ENCODE measurements at regions of chr19 and their contacts with region 1.

Region 1: DNA sequence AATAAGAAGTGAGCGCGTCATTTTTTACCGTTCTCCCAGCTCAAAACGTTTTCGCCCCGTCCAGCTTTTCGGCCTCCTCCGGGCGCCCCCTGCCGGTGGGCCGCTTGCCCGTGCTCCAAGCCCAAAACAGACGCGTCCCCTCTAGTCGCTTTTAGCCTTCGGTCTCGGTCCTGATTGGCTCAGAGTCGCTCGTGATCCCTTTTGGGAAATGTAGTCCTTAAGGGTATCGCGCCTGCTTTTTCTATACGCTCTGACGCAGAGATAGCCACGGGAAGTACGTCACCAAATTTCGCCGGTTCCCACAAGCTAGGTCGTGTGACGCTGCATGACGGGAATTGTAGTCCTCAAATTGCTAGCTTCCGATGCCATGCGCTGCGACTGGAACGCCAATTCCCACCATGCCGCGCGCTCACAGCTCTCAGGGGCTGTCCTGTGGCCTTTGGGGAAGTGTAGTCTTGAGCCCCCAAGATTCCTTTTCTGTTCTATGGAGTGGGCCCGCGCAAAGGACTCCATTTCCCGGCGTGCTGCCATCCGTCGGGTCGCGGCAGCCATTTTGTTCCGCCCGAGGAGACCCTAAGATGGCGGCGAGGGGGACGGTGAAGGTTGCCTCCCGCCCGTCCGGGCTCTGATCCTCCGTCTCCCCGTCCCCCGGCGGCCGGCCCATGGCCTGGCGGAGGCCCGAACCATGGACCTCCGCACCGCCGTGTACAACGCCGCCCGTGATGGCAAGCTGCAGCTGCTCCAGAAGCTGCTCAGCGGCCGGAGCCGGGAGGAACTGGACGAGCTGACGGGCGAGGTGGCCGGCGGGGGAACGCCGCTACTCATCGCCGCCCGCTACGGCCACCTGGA is at the start of gene FEM1A:
- DNase-seq: peak; percentile 100
- ATAC-seq: peak; percentile 98
- H3K4me3 ChIP-seq: peak within 1 kb of the TSS; percentile 76
- H3K27ac ChIP-seq: peak within 1 kb of the TSS; percentile 93
- H3K4me1 ChIP-seq: peaks cover 22% of the 10 kb centered on the region
- H3K27me3 ChIP-seq: no peaks in the 10 kb centered on the region
- CTCF ChIP-seq: peak; percentile 98 to 99 (median 99); a peak in 5 of 6 replicates
- EP300 ChIP-seq: no peak
- POLR2A ChIP-seq: peak; percentile 89
- RAD21 ChIP-seq: peak; percentile 72
- polyA plus RNA-seq, gene FEM1A: 0.27 to 0.31 TPM

Region 2: DNA sequence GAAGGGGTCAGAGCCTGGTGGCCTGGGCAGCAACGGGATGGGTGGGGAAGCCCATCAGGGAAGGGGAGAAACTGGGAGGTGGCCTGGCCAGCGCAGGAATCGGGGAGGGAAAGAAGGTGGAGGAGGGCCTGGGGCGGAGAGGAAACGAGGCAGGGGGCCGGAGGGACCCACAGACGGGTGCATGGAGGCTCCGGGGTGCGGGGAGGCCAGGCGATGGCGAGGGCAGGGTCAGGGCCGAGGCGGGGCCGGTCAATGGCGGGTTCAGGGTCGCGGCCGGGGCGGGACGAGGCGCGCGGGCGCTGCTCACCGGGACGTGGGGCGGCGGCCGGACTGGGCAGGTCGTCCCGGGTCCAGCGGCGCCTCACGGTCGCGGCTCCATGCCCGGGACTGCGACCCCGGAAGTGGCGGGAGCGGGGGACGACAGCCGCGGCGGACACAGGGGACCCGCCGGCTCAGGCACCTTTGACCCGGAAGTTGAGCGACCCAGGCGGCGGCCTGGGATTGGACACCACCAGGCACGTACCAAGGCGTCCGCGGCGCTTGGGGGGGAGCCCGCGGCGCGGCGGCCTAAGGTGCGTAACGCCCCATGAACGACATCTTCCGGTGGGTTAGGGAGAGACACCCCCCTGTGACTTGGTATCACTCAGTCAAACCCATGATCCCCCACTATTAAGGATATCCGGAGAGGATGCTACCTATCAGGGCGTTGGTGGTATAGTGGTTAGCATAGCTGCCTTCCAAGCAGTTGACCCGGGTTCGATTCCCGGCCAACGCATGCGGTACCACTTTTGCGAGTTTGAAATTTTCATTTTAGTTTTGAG is 67.8 kb before region 1 on chr19 and contains the start of gene DPP9:
- CTCF ChIA-PET with region 1: interaction called, 160 read pairs
- POLR2A ChIA-PET with region 1: interaction called, 17 read pairs
- RAD21 ChIA-PET with region 1: interaction called, 36 read pairs
- SMC1A ChIA-PET with region 1: interaction called, 87 read pairs
- in situ Hi-C with region 1: no loop called
- intact Hi-C with region 1: loop called (anchors 2 kb)
- DNase-seq: peak; percentile 100
- ATAC-seq: peak; percentile 96
- H3K4me3 ChIP-seq: peak within 1 kb of the TSS; percentile 100
- H3K27ac ChIP-seq: peak within 1 kb of the TSS; percentile 89
- H3K4me1 ChIP-seq: peaks cover 18% of the 10 kb centered on the region
- H3K27me3 ChIP-seq: no peaks in the 10 kb centered on the region
- CTCF ChIP-seq: peak in 2 of 3 experiments; percentile 21 to 41; a peak in 2 of 6 replicates
- EP300 ChIP-seq: peak; percentile 48 to 85; a peak in 3 of 4 replicates
- POLR2A ChIP-seq: peak; percentile 76
- RAD21 ChIP-seq: no peak
- polyA plus RNA-seq, gene DPP9: 0.64 to 1.2 TPM

Region 3: DNA sequence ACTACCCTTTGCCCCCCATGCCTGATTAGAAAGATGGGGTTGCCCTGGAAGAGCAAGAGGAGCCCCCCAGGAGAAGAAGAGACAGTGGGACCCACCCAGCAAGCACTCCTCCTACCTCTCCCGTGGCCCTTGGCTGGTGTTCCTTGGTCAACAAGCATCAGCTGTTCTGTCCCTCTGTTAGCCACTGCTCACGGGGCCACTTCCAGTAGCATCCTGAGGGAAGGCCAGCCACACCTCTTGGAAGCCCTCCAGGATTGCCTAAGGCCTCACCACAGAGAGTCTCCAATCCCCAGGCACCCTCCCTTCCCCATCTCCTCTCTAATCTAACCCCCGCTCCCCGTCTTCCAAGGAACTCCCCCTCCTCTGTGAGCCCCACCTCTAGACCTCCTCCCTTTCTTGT is 52.7 kb before region 1 on chr19:
- CTCF ChIA-PET with region 1: interaction called, 160 read pairs
- POLR2A ChIA-PET with region 1: interaction called, 21 read pairs
- RAD21 ChIA-PET with region 1: interaction called, 65 read pairs
- SMC1A ChIA-PET with region 1: interaction called, 87 read pairs
- in situ Hi-C with region 1: loop called (anchors 5 kb)
- intact Hi-C with region 1: no loop called
- DNase-seq: no peak
- ATAC-seq: no peak
- H3K4me3 ChIP-seq: no peak overlapping the region
- H3K27ac ChIP-seq: no peak overlapping the region
- H3K4me1 ChIP-seq: no peaks in the 10 kb centered on the region
- H3K27me3 ChIP-seq: no peaks in the 10 kb centered on the region; a peak in 1 of 4 replicates
- CTCF ChIP-seq: no peak
- EP300 ChIP-seq: no peak
- POLR2A ChIP-seq: no peak
- RAD21 ChIP-seq: no peak

Region 4: DNA sequence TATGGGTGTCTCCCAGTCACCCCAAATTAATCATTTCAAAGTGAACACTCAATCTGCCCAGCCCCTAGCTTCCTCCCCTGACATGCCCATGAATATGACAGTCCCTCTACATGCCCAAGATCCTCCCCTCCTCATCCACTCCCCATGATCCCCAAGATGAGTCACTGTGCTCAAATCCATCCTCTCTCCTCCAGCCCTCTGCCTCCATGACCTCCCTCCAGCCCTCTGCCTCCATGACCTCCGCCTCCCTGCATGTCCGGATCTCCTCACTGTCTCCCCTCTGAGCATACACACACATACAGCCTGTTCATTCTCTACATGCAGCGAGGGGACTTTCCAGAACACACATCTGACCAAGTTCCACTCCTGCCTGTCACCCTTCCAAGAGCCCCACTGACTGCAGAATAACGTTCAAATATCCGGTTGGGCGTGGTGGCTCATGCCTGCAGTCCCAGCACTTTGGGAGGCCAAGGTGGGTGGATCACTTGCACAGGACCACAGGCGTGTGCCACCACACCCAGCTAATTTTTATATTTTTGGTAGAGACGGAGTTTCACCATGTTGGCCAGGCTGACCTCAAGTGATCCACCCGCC is 18.2 kb before region 1 on chr19:
- CTCF ChIA-PET with region 1: interaction called, 17 read pairs
- POLR2A ChIA-PET with region 1: no interaction called
- RAD21 ChIA-PET with region 1: interaction called, 12 read pairs
- SMC1A ChIA-PET with region 1: interaction called, 10 read pairs
- in situ Hi-C with region 1: no loop called
- intact Hi-C with region 1: no loop called
- DNase-seq: peak; percentile 25
- ATAC-seq: peak; percentile 94
- H3K4me3 ChIP-seq: no peak overlapping the region
- H3K27ac ChIP-seq: no peak overlapping the region
- H3K4me1 ChIP-seq: no peaks in the 10 kb centered on the region
- H3K27me3 ChIP-seq: no peaks in the 10 kb centered on the region; a peak in 2 of 4 replicates
- CTCF ChIP-seq: no peak
- EP300 ChIP-seq: no peak
- POLR2A ChIP-seq: no peak
- RAD21 ChIP-seq: no peak

Region 5: DNA sequence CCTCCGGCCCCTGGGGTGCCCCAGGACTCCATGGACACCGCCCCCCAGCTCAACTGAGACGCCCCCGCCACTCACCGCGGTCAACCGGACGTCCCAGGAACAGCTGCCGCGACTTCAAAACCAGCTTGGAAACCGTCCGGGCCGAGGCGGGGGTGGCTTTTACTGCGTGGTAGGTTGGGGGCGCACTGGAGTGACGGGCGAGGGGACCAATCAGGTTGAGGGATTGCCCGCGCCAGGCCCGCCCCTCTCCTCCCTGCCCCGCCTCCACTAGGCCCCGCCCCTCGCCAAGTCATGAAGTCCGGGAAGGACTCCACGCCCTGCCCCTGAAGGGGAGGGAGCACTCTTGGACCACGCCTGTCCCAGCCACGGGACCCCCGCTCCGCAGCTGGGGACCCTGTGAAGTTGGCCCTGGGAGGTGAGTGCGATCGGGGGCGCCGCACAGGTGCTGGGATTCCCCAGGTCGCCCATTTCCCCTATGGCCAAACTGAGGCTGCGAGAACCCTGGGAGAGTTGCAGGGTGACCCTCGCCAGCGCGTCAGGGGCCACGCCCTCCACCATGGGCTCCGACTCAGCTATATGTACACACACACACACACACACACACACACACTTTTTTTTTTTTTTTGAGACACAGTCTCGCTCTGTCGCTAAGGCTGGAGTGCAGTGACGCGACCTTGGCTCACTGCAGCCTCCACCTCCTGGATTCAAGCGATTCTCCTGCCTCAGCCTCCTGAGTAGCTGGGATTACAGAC is 76.3 kb after region 1 on chr19 and contains the start of gene PLIN3:
- CTCF ChIA-PET with region 1: interaction called, 12 read pairs
- POLR2A ChIA-PET with region 1: no interaction called
- RAD21 ChIA-PET with region 1: interaction called, 3 read pairs
- SMC1A ChIA-PET with region 1: interaction called, 3 read pairs
- in situ Hi-C with region 1: no loop called
- intact Hi-C with region 1: no loop called
- DNase-seq: peak; percentile 65
- ATAC-seq: peak; percentile 86
- H3K4me3 ChIP-seq: peak within 1 kb of the TSS; percentile 98
- H3K27ac ChIP-seq: peak within 1 kb of the TSS; percentile 85
- H3K4me1 ChIP-seq: peaks cover 15% of the 10 kb centered on the region
- H3K27me3 ChIP-seq: no peaks in the 10 kb centered on the region
- CTCF ChIP-seq: no peak
- EP300 ChIP-seq: no peak
- POLR2A ChIP-seq: peak; percentile 74
- RAD21 ChIP-seq: no peak
- polyA plus RNA-seq, gene PLIN3: 7.7 to 19.0 TPM

Measured in GM12878 (cell line).